ENCODE measurements at regions of chr14 and their contacts with region 1.

Region 1: DNA sequence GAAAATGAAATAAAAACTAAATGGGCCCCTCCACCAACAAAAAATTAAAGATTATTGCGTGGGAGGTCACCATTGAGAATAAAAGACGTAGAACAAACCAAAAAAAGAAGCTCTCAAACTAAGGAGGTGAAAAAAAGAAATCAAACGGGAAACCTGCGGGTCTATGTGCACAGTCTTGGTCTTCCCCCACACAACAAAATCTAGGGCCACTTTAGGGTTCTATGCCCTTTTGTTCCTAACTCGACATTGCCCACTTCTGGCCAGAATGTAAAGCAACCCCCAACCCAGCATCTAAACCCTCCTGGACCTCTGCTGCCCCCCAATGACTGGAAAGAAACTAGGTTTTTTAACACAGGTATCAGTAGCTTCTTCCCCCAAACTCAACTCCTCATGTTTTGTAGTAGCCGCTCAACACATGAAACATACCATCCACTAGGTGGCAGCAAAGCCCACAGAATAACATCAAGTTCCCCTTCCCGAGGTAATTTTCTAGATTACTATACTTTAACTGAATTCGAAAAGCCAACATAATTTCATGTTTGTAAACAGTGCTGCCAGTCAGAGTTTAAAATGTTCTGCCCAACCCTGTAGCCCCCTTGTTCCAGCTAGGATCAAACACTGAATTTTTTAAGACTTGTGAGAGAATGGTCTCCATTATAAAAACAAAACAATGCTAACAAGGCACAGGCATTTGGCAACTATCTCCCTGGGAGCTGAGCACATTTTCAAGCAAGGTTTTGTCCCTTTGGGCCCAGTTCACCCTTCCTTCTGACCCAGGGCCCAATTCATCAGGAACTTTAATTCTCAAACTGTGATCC is 18.7 kb downstream of the DAD1 start:
- DNase-seq: peak; percentile 82
- ATAC-seq: peak; percentile 69
- H3K4me3 ChIP-seq: no peak overlapping the region
- H3K27ac ChIP-seq: no peak overlapping the region
- H3K4me1 ChIP-seq: peaks cover 8% of the 10 kb centered on the region
- H3K27me3 ChIP-seq: no peaks in the 10 kb centered on the region
- CTCF ChIP-seq: peak; percentile 77
- POLR2A ChIP-seq: no peak
- RAD21 ChIP-seq: peak; percentile 84

Region 2: GRCh38 chr14:22589096-22589839 is 18.9 kb after region 1 on chr14 and contains the start of gene DAD1:
- CTCF ChIA-PET with region 1: interaction called, 10 read pairs
- POLR2A ChIA-PET with region 1: no interaction called
- dilution Hi-C with region 1: no loop called
- in situ Hi-C with region 1: no loop called
- intact Hi-C with region 1: no loop called
- DNase-seq: peak; percentile 100
- ATAC-seq: peak; percentile 95
- H3K4me3 ChIP-seq: peak within 1 kb of the TSS; percentile 63
- H3K27ac ChIP-seq: peak within 1 kb of the TSS; percentile 75
- H3K4me1 ChIP-seq: peaks cover 3% of the 10 kb centered on the region
- H3K27me3 ChIP-seq: no peaks in the 10 kb centered on the region; the same call in 1 of the 2 replicates
- CTCF ChIP-seq: no peak
- POLR2A ChIP-seq: peak; percentile 97
- RAD21 ChIP-seq: no peak
- total RNA-seq, gene DAD1: 396 and 449 TPM in 2 replicates

Region 3: DNA sequence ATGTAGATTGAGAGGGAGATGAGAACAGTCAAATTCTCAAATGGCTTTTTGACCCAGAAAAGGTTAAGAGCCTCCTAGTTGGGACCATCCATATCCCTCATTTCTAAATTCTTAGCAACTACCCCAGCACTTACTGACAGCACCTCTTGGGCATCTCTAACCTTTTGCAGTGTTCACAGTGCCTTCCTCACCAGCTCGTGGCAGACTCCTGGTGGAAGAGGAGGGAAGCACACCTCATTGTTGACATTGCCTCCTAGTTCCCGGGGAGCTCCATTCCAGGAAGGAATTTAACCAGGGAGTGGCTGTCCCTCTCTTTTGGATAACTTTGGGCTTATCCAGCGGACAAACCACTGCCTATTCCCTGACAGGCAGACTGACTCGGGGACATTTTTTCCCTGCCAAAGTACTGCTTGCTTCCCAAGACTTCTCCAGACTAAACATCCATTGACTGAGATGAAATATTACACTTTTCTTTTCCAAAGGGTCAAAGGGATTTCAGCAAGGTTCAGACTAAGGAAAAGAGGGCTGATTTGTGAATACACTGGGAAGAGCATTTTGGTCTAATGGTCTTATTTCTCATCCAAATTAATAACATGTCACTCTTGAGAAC is 82.8 kb after region 1 on chr14:
- CTCF ChIA-PET with region 1: interaction called, 25 read pairs
- POLR2A ChIA-PET with region 1: no interaction called
- dilution Hi-C with region 1: no loop called
- in situ Hi-C with region 1: loop called (anchors 5 kb)
- intact Hi-C with region 1: loop called (anchors 1 kb)
- DNase-seq: peak; percentile 74
- ATAC-seq: peak; percentile 97
- H3K4me3 ChIP-seq: no peak overlapping the region
- H3K27ac ChIP-seq: no peak overlapping the region
- H3K4me1 ChIP-seq: no peaks in the 10 kb centered on the region
- H3K27me3 ChIP-seq: 0 out of 2 replicates have a peak, but pooled peaks cover 1% of the 10 kb centered on the region
- CTCF ChIP-seq: peak; percentile 95
- POLR2A ChIP-seq: 0 out of 2 replicates have a peak, but pooled peaks have one; percentile 23
- RAD21 ChIP-seq: peak; percentile 93

Region 4: GRCh38 chr14:22766456-22767322 is 196.3 kb after region 1 on chr14 and contains the start of gene OXA1L:
- CTCF ChIA-PET with region 1: interaction called, 3 read pairs
- POLR2A ChIA-PET with region 1: no interaction called
- dilution Hi-C with region 1: no loop called
- in situ Hi-C with region 1: no loop called
- intact Hi-C with region 1: loop called (anchors 2 kb)
- DNase-seq: peak; percentile 98
- ATAC-seq: peak; percentile 85
- H3K4me3 ChIP-seq: peak within 1 kb of the TSS; percentile 90
- H3K27ac ChIP-seq: peak within 1 kb of the TSS; percentile 92
- H3K4me1 ChIP-seq: peaks cover 5% of the 10 kb centered on the region
- H3K27me3 ChIP-seq: no peaks in the 10 kb centered on the region
- CTCF ChIP-seq: no peak
- POLR2A ChIP-seq: peak; percentile 72
- RAD21 ChIP-seq: no peak
- total RNA-seq, gene OXA1L: 40.0 and 47.3 TPM in 2 replicates

Region 5: DNA sequence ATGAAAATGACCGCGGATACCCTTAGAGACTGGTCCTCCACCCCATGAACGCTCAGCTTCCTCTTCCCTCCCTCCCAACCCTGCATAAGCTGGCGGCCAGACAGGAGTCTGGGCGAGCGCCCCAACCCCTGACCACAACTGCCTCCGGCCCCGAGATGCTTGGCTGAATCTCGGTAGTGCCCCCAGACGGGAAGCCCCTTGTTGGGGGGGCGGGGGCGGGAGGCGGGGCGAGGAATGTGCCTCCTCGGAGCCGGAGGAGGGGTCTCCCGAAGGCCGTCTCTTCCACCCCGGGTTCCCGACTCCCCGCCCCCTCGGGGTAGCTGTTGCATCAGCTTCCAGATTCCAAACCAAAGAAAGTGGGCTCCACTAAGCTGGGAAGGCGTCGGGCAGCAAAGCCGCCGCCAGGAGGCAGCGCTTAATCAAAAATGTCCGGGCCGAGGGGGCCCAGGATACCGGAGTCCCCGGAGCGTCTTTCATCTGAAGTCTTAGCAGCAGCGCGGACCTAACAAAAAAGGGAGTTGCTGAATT is 252.3 kb after region 1 on chr14:
- CTCF ChIA-PET with region 1: interaction called, 3 read pairs
- POLR2A ChIA-PET with region 1: no interaction called
- dilution Hi-C with region 1: no loop called
- in situ Hi-C with region 1: no loop called
- intact Hi-C with region 1: loop called (anchors 2 kb)
- DNase-seq: peak; percentile 86
- ATAC-seq: peak; percentile 73
- H3K4me3 ChIP-seq: peak overlapping the region; percentile 12; the same call in 1 of the 2 replicates
- H3K27ac ChIP-seq: peak overlapping the region; percentile 76
- H3K4me1 ChIP-seq: peaks cover 30% of the 10 kb centered on the region
- H3K27me3 ChIP-seq: no peaks in the 10 kb centered on the region
- CTCF ChIP-seq: peak; percentile 94
- POLR2A ChIP-seq: peak; percentile 34; the same call in 1 of the 2 replicates
- RAD21 ChIP-seq: peak; percentile 90

Region 6: GRCh38 chr14:22829661-22830442 is 259.5 kb after region 1 on chr14 and contains the start of gene MRPL52:
- CTCF ChIA-PET with region 1: interaction called, 12 read pairs
- POLR2A ChIA-PET with region 1: no interaction called
- dilution Hi-C with region 1: no loop called
- in situ Hi-C with region 1: no loop called
- intact Hi-C with region 1: no loop called
- DNase-seq: peak; percentile 87
- ATAC-seq: peak; percentile 97
- H3K4me3 ChIP-seq: peak within 1 kb of the TSS; percentile 95
- H3K27ac ChIP-seq: peak within 1 kb of the TSS; percentile 82
- H3K4me1 ChIP-seq: peaks cover 6% of the 10 kb centered on the region
- H3K27me3 ChIP-seq: no peaks in the 10 kb centered on the region
- CTCF ChIP-seq: no peak
- POLR2A ChIP-seq: peak; percentile 85
- RAD21 ChIP-seq: no peak
- total RNA-seq, gene MRPL52: 23.9 and 51.4 TPM in 2 replicates

Region 7: GRCh38 chr14:23057757-23058653 is 487.7 kb after region 1 on chr14:
- CTCF ChIA-PET with region 1: no interaction called
- POLR2A ChIA-PET with region 1: no interaction called
- dilution Hi-C with region 1: no loop called
- in situ Hi-C with region 1: no loop called
- intact Hi-C with region 1: loop called (anchors 2 kb)
- DNase-seq: peak; percentile 76
- ATAC-seq: peak; percentile 55
- H3K4me3 ChIP-seq: peak overlapping the region; percentile 62
- H3K27ac ChIP-seq: peak overlapping the region; percentile 70
- H3K4me1 ChIP-seq: peaks cover 19% of the 10 kb centered on the region
- H3K27me3 ChIP-seq: no peaks in the 10 kb centered on the region
- CTCF ChIP-seq: peak; percentile 89
- POLR2A ChIP-seq: no peak; the same call in 1 of the 2 replicates
- RAD21 ChIP-seq: peak; percentile 82

Measured in IMR-90 (cell line).